Common myeloid progenitor, CD34-positive (primary cell): ENCODE measurements at regions of chr15 and their contacts with region 1.

Region 1: GRCh38 chr15:57561041-57561711 is 30.5 kb upstream of the MYZAP start:
- DNase-seq: peak; percentile 62 to 79 (median 77)
- H3K4me3 ChIP-seq: peak overlapping the region in 3 of 7 experiments; percentile 21 to 40 (median 27)
- H3K27ac ChIP-seq: no peak overlapping the region
- H3K4me1 ChIP-seq: peaks cover 17 to 45% (median 30%) of the 10 kb centered on the region in 4 experiments
- H3K27me3 ChIP-seq: no peaks in the 10 kb centered on the region

Region 2: GRCh38 chr15:57198654-57199291 is 362.4 kb before region 1 on chr15:
- CTCF ChIA-PET with region 1: no interaction called
- POLR2A ChIA-PET with region 1: no interaction called
- DNase-seq: no peak
- H3K4me3 ChIP-seq: no peak overlapping the region
- H3K27ac ChIP-seq: no peak overlapping the region
- H3K4me1 ChIP-seq: no peaks in the 10 kb centered on the region
- H3K27me3 ChIP-seq: no peaks in the 10 kb centered on the region

Region 3: DNA sequence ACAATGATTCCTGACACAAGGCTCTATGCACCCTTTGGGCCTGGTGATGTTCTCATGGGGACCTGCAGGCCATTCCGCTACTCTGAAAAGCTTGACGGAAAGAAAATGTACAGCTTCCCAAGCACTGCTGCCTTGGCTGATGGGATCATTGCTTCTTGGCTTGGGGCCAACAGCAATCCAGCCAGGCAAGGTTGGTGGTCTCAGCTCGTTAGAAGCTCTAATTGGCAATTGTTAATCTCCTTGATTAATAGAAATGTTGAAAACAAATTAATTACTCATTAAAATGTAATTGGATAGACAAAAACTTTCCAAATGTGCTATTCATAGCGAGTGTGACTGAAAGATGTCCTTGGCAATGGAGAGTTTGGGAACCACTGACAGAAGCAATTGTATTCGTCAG is 14.2 kb after region 1 on chr15:
- CTCF ChIA-PET with region 1: interaction called, 10 read pairs
- POLR2A ChIA-PET with region 1: no interaction called
- DNase-seq: no peak
- H3K4me3 ChIP-seq: no peak overlapping the region
- H3K27ac ChIP-seq: no peak overlapping the region
- H3K4me1 ChIP-seq: peaks cover 0 to 11% (median 2%) of the 10 kb centered on the region in 4 experiments
- H3K27me3 ChIP-seq: no peaks in the 10 kb centered on the region

Region 4: DNA sequence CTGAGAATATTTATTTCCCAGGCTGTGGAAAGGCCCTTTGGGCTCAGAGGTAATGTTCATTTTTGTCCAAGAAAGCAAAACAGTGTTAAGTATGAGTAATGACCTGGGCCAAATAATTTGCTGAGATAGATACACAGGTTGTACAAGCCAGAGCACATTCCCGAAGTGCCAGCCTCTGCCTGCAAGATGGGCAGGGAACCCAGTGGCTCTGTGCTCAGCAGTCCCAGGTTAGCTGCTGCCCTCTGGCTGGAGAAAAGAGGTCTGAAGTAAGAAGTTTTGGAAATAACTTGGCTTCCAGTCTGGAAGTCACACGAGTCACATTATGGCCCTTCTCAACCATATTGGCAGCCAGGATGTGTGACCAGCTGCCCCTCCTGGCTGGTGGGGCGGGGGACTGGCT is 50.8 kb after region 1 on chr15:
- CTCF ChIA-PET with region 1: interaction called, 10 read pairs
- POLR2A ChIA-PET with region 1: no interaction called
- DNase-seq: peak in 2 of 3 donors; percentile 42 to 51
- H3K4me3 ChIP-seq: no peak overlapping the region
- H3K27ac ChIP-seq: no peak overlapping the region
- H3K4me1 ChIP-seq: peaks cover 0 to 7% (median 3%) of the 10 kb centered on the region in 4 experiments
- H3K27me3 ChIP-seq: no peaks in the 10 kb centered on the region